ENCODE measurements at regions of chr6 and their contacts with region 1.

Region 1: GRCh38 chr6:44221291-44221960 is 2.0 kb upstream of the SLC29A1 start:
- DNase-seq: peak; percentile 95
- H3K4me3 ChIP-seq: peak overlapping the region in 1 of 3 experiments; percentile 30
- H3K27ac ChIP-seq: peak overlapping the region; percentile 97
- H3K4me1 ChIP-seq: peaks cover 61% of the 10 kb centered on the region
- H3K27me3 ChIP-seq: no peaks in the 10 kb centered on the region
- CTCF ChIP-seq: peak; percentile 89 to 98
- POLR2A ChIP-seq: no peak

Region 2: DNA sequence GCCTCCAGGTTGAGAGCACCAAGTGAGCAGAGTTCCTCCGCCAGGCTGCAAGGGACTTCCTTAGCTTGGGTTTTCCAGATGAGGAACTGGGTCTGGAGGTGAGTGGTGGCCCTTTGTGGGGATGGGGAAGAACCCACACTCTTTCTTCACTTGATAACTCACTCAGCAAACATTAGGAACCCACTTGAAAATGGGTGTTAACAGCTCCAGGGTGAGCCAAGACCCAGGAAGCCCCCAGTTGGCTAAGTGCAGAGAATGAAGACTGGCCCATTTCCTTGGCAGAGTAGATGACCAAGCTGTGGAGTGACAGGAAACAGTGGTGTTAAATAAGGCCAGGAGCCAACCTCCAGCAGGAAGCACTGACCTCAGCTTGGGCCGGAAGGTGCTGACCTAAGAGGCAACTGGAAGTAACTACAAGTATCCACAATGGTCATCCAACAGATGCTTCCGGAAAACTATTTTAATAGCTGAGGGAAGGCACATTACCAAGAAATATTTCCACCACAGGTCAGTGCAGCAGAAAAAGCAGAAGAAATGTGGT is 116.9 kb before region 1 on chr6:
- CTCF ChIA-PET with region 1: no interaction called
- POLR2A ChIA-PET with region 1: no interaction called
- dilution Hi-C with region 1: no loop called
- intact Hi-C with region 1: loop called (anchors 1 kb)
- DNase-seq: peak; percentile 97
- H3K4me3 ChIP-seq: no peak overlapping the region
- H3K27ac ChIP-seq: peak overlapping the region; percentile 89
- H3K4me1 ChIP-seq: peaks cover 37% of the 10 kb centered on the region
- H3K27me3 ChIP-seq: no peaks in the 10 kb centered on the region
- CTCF ChIP-seq: no peak
- POLR2A ChIP-seq: peak; percentile 84

Region 3: DNA sequence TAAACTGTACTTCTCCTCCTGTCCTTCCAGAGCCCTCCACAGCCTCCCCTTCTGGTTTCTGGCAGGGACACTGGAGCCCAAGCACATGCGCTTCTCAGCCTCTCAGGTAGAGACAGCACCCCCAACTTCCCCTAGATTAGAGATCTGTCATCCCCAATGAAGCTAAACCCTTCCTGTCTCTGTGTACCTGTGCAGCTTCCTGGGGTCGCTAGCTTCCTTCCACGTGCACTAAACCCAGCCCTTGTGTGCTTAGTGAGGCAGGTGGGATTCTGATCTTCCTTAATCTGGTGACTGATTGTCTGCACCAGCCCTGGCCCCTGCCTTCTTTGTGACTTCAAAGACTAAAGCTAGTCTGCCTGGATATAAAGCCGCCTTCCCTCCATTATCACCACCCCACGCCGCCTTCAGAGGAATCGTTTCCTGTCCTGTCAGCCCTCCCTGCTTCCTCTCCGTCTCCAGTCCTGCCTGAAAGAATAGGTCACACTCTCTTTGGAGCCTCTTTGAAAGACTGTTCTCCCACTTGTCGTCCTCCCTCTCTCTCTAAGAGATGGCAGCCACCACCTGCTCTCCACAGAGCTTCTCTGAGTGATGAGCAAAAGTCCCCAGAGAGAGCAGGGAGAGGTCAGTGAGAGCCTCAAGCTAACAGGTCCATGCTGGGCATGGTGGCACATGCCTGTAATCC is 35.3 kb before region 1 on chr6:
- CTCF ChIA-PET with region 1: interaction called, 28 read pairs
- POLR2A ChIA-PET with region 1: interaction called, 3 read pairs
- dilution Hi-C with region 1: no loop called
- intact Hi-C with region 1: loop called (anchors 2 kb)
- DNase-seq: peak; percentile 32
- H3K4me3 ChIP-seq: no peak overlapping the region
- H3K27ac ChIP-seq: peak overlapping the region; percentile 76
- H3K4me1 ChIP-seq: peaks cover 17% of the 10 kb centered on the region
- H3K27me3 ChIP-seq: no peaks in the 10 kb centered on the region
- CTCF ChIP-seq: no peak
- POLR2A ChIP-seq: no peak

Region 4: GRCh38 chr6:44237813-44238433 is 16.5 kb after region 1 on chr6:
- CTCF ChIA-PET with region 1: interaction called, 55 read pairs
- POLR2A ChIA-PET with region 1: interaction called, 4 read pairs
- dilution Hi-C with region 1: no loop called
- intact Hi-C with region 1: loop called (anchors 1 kb)
- DNase-seq: peak; percentile 67
- H3K4me3 ChIP-seq: peak overlapping the region in 1 of 3 experiments; percentile 35
- H3K27ac ChIP-seq: peak overlapping the region; percentile 70
- H3K4me1 ChIP-seq: peaks cover 41% of the 10 kb centered on the region
- H3K27me3 ChIP-seq: no peaks in the 10 kb centered on the region
- CTCF ChIP-seq: peak; percentile 99
- POLR2A ChIP-seq: peak; percentile 13

Region 5: GRCh38 chr6:44246663-44247337 is 25.4 kb after region 1 on chr6 and contains the start of gene HSP90AB1:
- CTCF ChIA-PET with region 1: interaction called, 7 read pairs
- POLR2A ChIA-PET with region 1: interaction called, 34 read pairs
- dilution Hi-C with region 1: no loop called
- intact Hi-C with region 1: no loop called
- DNase-seq: peak; percentile 98
- H3K4me3 ChIP-seq: peak within 1 kb of the TSS; percentile 54 to 85 (median 76)
- H3K27ac ChIP-seq: peak within 1 kb of the TSS; percentile 65
- H3K4me1 ChIP-seq: peaks cover 26% of the 10 kb centered on the region
- H3K27me3 ChIP-seq: no peaks in the 10 kb centered on the region
- CTCF ChIP-seq: no peak
- POLR2A ChIP-seq: peak; percentile 100
- total RNA-seq, gene HSP90AB1: 1,088 and 1,201 TPM in 2 replicates

Region 6: DNA sequence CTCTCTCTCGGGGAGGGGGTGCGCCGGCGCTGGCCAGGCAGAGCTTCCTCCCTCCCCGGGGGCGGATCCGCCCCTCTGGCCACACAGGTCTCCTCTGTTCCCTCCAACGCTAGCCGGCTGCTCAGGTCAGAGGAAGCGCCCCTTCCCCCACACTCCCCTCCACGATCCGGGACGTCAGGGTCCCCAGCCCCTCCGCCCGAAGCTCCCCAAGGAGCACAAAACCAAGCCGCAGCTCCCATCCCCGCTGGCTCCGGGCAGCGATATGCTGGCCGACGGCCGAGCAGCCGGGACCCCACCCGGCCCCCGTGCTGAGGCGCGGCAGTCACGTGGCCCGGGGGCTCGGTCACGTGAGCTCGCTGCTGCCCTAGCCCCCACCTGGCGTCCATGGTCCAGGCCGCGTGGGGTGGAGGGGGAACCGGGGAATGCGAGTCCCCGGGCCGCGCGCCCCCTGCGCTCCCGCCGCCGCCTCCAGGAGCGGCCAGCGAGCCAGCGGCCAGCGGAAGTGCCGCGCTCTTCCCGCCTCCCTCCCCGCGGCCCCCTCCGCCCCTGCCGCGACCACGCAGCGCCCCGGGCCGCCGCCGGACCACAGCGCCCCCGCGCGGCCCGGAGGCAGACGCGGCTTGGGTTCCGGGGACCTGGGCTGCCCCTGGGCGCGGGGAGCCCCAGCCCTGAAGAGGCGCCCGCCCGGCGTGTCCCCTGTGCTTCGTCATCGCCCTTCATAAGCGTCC is 35.8 kb after region 1 on chr6 and contains the start of gene SLC35B2:
- CTCF ChIA-PET with region 1: interaction called, 4 read pairs
- POLR2A ChIA-PET with region 1: interaction called, 6 read pairs
- dilution Hi-C with region 1: no loop called
- intact Hi-C with region 1: loop called (anchors 2 kb)
- DNase-seq: peak; percentile 76
- H3K4me3 ChIP-seq: peak within 1 kb of the TSS; percentile 67 to 89 (median 74)
- H3K27ac ChIP-seq: peak within 1 kb of the TSS; percentile 49
- H3K4me1 ChIP-seq: peaks cover 14% of the 10 kb centered on the region
- H3K27me3 ChIP-seq: no peaks in the 10 kb centered on the region
- CTCF ChIP-seq: peak; percentile 65 to 66
- POLR2A ChIP-seq: peak; percentile 79
- total RNA-seq, gene SLC35B2: 53.4 and 53.9 TPM in 2 replicates

Measured in endothelial cell of umbilical vein (primary cell).